Transverse colon (tissue), 4 donors: ENCODE measurements at regions of chr14 and their contacts with region 1.

Region 1: DNA sequence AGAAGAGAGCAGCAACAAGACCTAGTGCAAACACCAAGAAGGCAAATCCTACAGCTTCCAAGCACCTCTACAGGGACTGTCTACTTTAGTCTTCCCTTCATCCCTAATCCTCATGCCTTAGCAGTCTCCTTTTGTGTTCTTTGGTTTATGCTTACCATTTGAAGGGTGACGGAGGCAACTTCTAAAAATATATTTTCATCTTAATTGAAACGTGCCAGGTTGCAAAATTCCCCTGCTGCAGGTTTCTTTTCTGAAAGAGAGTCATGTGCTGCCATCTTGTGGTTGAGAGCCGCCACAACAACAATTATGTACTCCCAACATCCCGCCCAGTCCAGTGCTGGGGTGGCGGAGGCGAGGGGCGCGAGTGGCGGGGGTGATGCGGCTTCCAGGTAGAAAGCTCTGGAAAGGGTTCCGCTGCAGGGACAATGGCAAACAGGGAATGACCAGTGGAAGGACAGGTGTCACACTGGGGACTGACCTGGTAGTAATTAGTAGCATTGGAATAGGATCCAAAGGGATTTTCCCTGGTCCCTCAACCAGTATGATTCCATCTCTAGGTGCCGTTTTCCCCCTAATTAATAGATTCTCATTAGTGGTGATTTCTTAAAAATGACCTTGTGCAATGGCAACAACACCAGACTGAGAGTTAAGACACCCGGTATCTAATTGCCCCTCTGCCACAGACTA is 80.3 kb upstream of the GNG2 start:
- DNase-seq: peak; percentile 77
- H3K4me3 ChIP-seq: no peak overlapping the region
- H3K27ac ChIP-seq: no peak overlapping the region
- H3K4me1 ChIP-seq: peaks cover 0 to 15% (median 2%) of the 10 kb centered on the region in 4 donors
- H3K27me3 ChIP-seq: peaks cover 6% of the 10 kb centered on the region
- CTCF ChIP-seq: peak; percentile 73 to 88 (median 81)
- EP300 ChIP-seq: no peak
- POLR2A ChIP-seq: no peak

Region 2: GRCh38 chr14:50954811-50955372 is 825.3 kb before region 1 on chr14:
- in situ Hi-C with region 1: loop called in 1 of 4 experiments (anchors 25 kb)
- intact Hi-C with region 1: no loop called
- DNase-seq: no peak
- H3K4me3 ChIP-seq: no peak overlapping the region
- H3K27ac ChIP-seq: peak overlapping the region; percentile 34 to 63 (median 47)
- H3K4me1 ChIP-seq: peaks cover 0 to 12% (median 2%) of the 10 kb centered on the region in 4 donors
- H3K27me3 ChIP-seq: no peaks in the 10 kb centered on the region
- CTCF ChIP-seq: peak; percentile 53 to 75 (median 55)
- EP300 ChIP-seq: no peak
- POLR2A ChIP-seq: no peak

Region 3: DNA sequence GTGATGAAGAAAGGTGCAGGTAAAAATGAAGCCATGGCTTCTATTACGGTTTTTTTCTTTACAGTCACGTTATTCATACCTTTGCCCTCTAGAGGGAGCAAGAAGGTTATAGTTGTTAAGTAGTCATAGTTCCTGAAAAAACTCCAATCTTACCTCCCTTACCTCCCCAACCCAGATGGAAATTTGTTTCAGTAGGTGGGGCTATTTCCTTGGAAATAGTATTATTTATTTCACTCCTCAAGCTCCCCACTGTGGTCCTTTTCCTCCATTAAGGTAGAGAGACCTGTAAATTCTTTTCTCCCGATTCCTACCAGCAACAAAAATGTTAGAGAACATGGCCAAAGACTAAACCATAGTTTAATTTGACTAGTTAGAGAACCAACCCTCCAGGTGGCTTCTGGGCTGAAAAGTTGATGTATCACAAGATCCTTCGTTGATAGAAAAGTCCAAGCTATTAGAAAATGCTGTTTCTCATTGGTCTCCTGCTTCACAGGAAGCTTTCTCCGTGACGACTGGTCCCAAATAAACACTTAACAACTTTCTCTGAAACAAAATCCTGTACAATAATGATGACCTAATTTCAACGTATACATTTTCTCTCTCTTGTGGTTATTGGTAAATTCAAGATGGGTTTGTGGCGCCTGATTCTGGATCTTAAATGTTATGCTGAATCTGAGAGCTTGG is 496.6 kb before region 1 on chr14:
- in situ Hi-C with region 1: loop called (anchors 10 kb)
- intact Hi-C with region 1: loop called (anchors 5 kb)
- DNase-seq: no peak
- H3K4me3 ChIP-seq: no peak overlapping the region
- H3K27ac ChIP-seq: no peak overlapping the region
- H3K4me1 ChIP-seq: peaks cover 0 to 5% (median 0%) of the 10 kb centered on the region in 4 donors
- H3K27me3 ChIP-seq: no peaks in the 10 kb centered on the region
- CTCF ChIP-seq: peak; percentile 70 to 86 (median 73)
- EP300 ChIP-seq: no peak
- POLR2A ChIP-seq: no peak

Region 4: GRCh38 chr14:51369814-51370213 is 410.3 kb before region 1 on chr14:
- in situ Hi-C with region 1: loop called in 1 of 4 experiments (anchors 10 kb)
- intact Hi-C with region 1: no loop called
- DNase-seq: no peak
- H3K4me3 ChIP-seq: no peak overlapping the region
- H3K27ac ChIP-seq: no peak overlapping the region
- H3K4me1 ChIP-seq: no peaks in the 10 kb centered on the region
- H3K27me3 ChIP-seq: no peaks in the 10 kb centered on the region
- CTCF ChIP-seq: peak in 3 of 5 experiments; percentile 25 to 41 (median 29)
- EP300 ChIP-seq: no peak
- POLR2A ChIP-seq: no peak

Region 5: GRCh38 chr14:51651388-51652167 is 128.6 kb before region 1 on chr14 and contains the start of gene FRMD6:
- in situ Hi-C with region 1: loop called in 1 of 4 experiments (anchors 10 kb)
- intact Hi-C with region 1: no loop called
- DNase-seq: peak; percentile 86
- H3K4me3 ChIP-seq: peak within 1 kb of the TSS; percentile 67 to 99 (median 93)
- H3K27ac ChIP-seq: peak within 1 kb of the TSS; percentile 91 to 97 (median 94)
- H3K4me1 ChIP-seq: peaks cover 0 to 33% (median 9%) of the 10 kb centered on the region in 4 donors
- H3K27me3 ChIP-seq: peaks cover 37% of the 10 kb centered on the region
- CTCF ChIP-seq: peak; percentile 71 to 85 (median 79)
- EP300 ChIP-seq: no peak
- POLR2A ChIP-seq: peak; percentile 65
- total RNA-seq, gene FRMD6: 8.4 to 21.7 (median 11.7) TPM

Region 6: GRCh38 chr14:51666826-51667225 is 113.3 kb before region 1 on chr14:
- in situ Hi-C with region 1: no loop called
- intact Hi-C with region 1: no loop called
- DNase-seq: no peak
- H3K4me3 ChIP-seq: no peak overlapping the region
- H3K27ac ChIP-seq: no peak overlapping the region
- H3K4me1 ChIP-seq: no peaks in the 10 kb centered on the region
- H3K27me3 ChIP-seq: no peaks in the 10 kb centered on the region
- CTCF ChIP-seq: no peak
- EP300 ChIP-seq: no peak
- POLR2A ChIP-seq: no peak

Region 7: GRCh38 chr14:51989293-51990234 is 209.4 kb after region 1 on chr14 and contains the start of gene RTRAF:
- in situ Hi-C with region 1: loop called in 1 of 4 experiments (anchors 25 kb)
- intact Hi-C with region 1: no loop called
- DNase-seq: peak; percentile 96
- H3K4me3 ChIP-seq: peak within 1 kb of the TSS; percentile 87 to 97 (median 90)
- H3K27ac ChIP-seq: peak within 1 kb of the TSS; percentile 90 to 94 (median 94)
- H3K4me1 ChIP-seq: peaks cover 8 to 20% (median 13%) of the 10 kb centered on the region in 4 donors
- H3K27me3 ChIP-seq: no peaks in the 10 kb centered on the region
- CTCF ChIP-seq: no peak
- EP300 ChIP-seq: no peak
- POLR2A ChIP-seq: peak; percentile 91
- total RNA-seq, gene RTRAF: 28.1 to 92.8 (median 51.5) TPM